IMR-90 (cell line): ENCODE measurements at regions of chr16 and their contacts with region 1.

Region 1: DNA sequence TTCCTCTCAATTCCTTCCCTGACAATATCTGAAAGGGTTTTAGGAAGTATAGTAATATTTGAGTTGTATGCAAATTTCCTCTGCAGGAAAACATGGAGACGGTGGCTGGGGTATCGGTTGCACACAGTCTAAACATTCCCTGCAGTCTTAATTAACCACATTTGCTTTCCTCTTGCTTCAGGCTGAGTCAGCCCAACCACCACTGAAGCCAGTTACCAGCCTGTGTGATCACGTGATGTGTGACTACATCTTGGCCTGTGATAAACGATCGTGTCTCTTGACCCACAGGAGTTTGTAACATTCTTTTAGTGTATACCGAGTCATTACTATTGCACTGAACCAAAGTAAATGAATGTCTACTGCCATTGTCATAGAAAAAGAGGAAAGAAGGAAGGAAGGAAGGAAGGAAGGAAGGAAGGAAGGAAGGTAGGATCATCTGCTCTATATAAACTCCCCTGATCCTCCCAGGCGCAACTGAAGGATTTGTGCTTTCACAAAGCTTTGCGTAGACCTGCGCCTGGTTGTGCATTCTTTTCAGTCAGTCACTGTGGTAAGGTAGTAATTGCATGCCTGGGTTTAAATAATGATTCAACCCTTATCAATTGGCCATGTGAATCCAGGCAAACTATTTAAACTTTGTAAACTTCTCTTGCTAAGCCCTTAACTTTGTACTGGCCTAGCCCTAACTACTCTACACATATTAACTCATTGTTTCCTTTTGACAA is 280.6 kb upstream of the SALL1 start:
- DNase-seq: peak; percentile 99
- ATAC-seq: peak; percentile 98
- H3K4me3 ChIP-seq: no peak overlapping the region
- H3K27ac ChIP-seq: peak overlapping the region; percentile 29; the same call in 1 of the 2 replicates
- H3K4me1 ChIP-seq: peaks cover 5% of the 10 kb centered on the region; the same call in 1 of the 2 replicates
- H3K27me3 ChIP-seq: no peaks in the 10 kb centered on the region
- CTCF ChIP-seq: no peak
- POLR2A ChIP-seq: no peak
- RAD21 ChIP-seq: peak; percentile 0; the same call in 1 of the 2 replicates

Region 2: DNA sequence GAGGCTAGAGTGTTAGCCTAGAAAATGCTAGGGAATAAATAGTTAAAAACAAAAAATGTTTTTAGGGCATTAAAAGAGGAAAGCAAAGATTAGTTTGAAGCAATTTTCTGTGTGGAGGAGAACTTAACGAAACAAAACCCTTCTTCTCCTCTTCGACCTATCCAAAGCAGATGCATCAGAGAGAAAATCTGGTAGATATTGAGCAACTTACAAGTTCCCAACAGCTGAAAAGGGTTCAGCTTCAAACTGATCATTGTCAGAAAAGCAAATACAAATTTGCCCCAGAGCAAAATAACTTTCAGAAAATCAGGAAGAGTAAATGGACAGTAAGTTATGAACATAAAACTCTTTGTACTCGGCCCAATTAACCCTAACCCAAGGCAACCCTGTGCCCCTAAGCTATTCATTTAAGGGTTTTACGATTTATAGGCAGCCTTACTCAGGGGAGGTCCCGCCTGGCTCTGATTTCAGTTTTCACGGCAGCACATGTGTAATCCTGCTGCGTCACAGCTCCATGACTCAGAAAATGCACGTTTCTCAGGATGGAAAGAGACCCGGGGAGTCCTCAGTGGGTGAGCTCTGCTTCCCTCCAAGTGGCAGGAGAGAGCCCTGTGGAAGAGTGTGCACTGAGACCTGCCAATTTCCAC is 125.1 kb after region 1 on chr16:
- CTCF ChIA-PET with region 1: no interaction called
- POLR2A ChIA-PET with region 1: no interaction called
- dilution Hi-C with region 1: no loop called
- in situ Hi-C with region 1: no loop called
- intact Hi-C with region 1: loop called (anchors 5 kb)
- DNase-seq: peak; percentile 96
- ATAC-seq: peak; percentile 95
- H3K4me3 ChIP-seq: no peak overlapping the region
- H3K27ac ChIP-seq: peak overlapping the region; percentile 5; the same call in 1 of the 2 replicates
- H3K4me1 ChIP-seq: peaks cover 9% of the 10 kb centered on the region
- H3K27me3 ChIP-seq: no peaks in the 10 kb centered on the region
- CTCF ChIP-seq: peak; percentile 20
- POLR2A ChIP-seq: 0 out of 2 replicates have a peak, but pooled peaks have one; percentile 31
- RAD21 ChIP-seq: peak; percentile 30

Region 3: DNA sequence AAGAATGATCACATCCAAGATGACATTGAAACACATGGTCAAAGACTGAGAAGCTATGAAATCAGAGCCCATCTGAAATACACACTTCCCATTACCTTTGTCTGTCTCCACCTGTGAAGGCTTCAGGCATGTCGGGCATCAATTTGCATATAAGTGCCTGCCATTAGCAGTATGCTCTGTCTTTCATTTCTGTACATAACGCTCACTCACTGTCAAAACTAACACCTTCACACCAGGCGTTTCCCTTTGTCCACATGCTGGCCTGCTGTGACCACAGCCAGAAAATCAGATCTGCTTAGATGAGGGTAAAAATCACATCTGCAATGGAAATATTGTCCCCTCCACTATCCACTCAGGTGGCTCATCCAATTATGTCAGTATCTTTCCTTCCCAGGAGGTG is 590.5 kb after region 1 on chr16:
- CTCF ChIA-PET with region 1: no interaction called
- POLR2A ChIA-PET with region 1: no interaction called
- dilution Hi-C with region 1: no loop called
- in situ Hi-C with region 1: no loop called
- intact Hi-C with region 1: no loop called
- DNase-seq: no peak
- ATAC-seq: no peak
- H3K4me3 ChIP-seq: no peak overlapping the region
- H3K27ac ChIP-seq: no peak overlapping the region
- H3K4me1 ChIP-seq: no peaks in the 10 kb centered on the region
- H3K27me3 ChIP-seq: no peaks in the 10 kb centered on the region
- CTCF ChIP-seq: no peak
- POLR2A ChIP-seq: no peak
- RAD21 ChIP-seq: no peak